GM23248 (cell line): ENCODE measurements at regions of chr20 and their contacts with region 1.

Region 1: DNA sequence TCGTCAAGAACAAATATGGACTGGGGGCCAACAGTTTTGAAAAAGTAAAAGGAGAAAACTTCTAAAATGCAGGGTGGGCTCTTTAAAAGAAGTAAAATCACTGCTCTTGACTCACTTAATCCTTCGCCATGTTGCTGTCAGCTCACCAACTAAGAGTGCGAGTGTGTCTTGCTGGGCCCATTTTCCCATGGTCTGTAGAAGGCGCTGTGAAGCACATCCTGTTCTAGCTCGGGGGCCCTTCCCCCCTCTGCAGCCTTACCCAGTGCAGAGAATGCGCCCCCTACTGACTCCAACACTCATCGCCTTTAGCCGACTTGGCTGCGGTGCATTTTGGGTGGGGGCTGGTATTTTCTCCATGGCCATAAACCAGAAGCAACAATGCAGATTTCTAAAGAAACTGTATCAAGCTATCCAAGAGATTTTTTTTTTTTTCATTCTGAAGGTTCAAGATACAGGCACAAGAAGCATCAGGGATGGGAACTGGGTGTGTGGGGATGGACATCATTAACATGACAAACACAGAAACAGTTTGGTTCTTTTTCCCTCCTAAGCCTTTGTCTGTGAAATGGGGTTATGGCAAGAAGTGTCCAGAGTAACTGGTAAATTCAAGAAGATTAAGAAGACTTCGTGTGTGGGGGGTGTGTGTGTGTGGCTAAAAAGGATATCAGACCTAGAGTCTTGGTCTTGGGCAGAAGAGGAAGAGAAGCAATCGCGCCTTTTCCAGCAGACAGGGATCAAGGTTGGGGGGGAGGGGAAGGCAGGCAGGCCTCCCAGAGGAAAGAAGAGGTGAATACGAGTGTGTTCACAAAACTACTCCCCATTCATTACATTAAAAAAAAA is 1.7 kb downstream of the ADNP start:
- DNase-seq: peak; percentile 98
- H3K4me3 ChIP-seq: peak overlapping the region; percentile 82
- H3K27ac ChIP-seq: peak overlapping the region; percentile 33
- H3K4me1 ChIP-seq: peaks cover 46% of the 10 kb centered on the region
- H3K27me3 ChIP-seq: no peaks in the 10 kb centered on the region

Region 2: DNA sequence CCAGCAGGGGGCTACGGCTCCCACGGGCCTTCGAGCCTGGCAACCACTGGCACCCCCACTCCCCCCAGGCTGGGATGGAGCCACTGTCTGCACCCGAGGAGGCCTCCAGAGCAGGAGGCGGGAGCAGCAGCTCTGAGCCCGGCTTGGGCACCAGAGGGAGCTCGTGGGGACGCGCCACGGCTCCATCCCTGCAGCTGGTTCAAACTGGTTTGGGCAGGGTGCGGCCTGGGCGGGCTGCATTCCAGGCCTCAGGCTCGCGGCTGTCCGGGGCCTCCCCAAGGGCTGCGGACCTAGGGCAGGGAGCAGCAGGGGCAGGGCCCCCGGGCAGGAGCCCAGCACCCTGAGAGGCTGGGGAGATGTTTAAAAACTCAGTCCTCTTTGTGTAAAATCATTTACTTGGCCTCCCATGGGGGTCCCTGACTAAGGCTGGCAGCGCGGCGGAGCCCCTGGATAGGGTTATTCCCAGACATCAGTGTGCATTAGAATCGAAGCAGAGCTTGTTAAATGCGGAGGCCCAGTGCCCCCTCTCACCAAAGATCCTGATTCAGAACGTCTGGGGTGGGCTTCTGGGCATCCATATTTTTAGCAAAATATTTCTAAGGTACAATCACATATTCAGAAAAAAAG is 138.8 kb before region 1 on chr20:
- in situ Hi-C with region 1: loop called (anchors 10 kb)
- DNase-seq: peak; percentile 97
- H3K4me3 ChIP-seq: peak overlapping the region; percentile 51; the same call in 1 of the 2 replicates
- H3K27ac ChIP-seq: peak overlapping the region; percentile 77
- H3K4me1 ChIP-seq: peaks cover 20% of the 10 kb centered on the region
- H3K27me3 ChIP-seq: no peaks in the 10 kb centered on the region